Caco-2 (cell line): ENCODE measurements at regions of chr12 and their contacts with region 1.

Region 1: DNA sequence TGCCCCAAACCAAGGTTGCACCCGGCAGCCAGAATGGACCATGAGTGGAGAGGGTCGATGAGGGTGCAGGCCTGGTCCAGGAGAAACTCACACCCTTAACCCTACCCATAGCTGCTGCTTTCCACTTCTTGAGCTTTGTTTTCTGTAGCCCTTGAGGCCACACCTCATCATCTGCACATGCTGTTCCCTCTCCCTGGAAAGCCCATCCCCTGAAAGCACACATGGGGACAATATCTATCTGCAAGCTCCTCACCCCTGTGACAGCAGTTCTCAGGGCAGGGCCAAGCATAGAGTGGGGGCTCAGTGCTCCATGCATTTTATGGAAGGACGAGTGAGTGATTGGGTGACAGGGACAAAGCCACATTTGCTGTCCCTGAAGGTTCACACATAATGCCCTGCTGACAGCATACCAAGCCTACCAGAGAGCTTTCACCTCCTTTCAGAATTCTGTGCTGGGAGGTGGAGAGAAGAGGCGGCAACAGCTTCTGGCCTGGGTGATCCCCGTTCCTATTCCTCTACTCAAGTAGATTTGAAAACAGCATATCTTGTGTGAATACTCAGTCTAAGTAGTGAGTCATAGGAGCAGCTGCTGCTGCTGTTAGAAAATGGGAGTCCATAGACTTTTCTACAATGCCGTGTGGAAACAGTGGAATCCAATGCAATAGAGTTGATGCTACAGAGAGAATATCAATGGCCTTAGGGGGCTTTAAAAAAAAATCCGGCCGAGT is 44.6 kb downstream of the SRGAP1 start:
- DNase-seq: no peak
- H3K4me3 ChIP-seq: no peak overlapping the region
- H3K4me3 Mint-ChIP-seq: no peak overlapping the region
- H3K27ac Mint-ChIP-seq: peak overlapping the region; percentile 74
- H3K4me1 ChIP-seq: peaks cover 39% of the 10 kb centered on the region
- H3K4me1 Mint-ChIP-seq: peaks cover 43% of the 10 kb centered on the region
- H3K27me3 ChIP-seq: no peaks in the 10 kb centered on the region
- H3K27me3 Mint-ChIP-seq: no peaks in the 10 kb centered on the region
- CTCF ChIP-seq: no peak

Region 2: GRCh38 chr12:63862214-63863107 is 26.6 kb before region 1 on chr12:
- CTCF ChIA-PET with region 1: no interaction called
- POLR2A ChIA-PET with region 1: interaction called, 6 read pairs
- intact Hi-C with region 1: loop called (anchors 1 kb)
- DNase-seq: peak; percentile 76 to 83
- H3K4me3 ChIP-seq: no peak overlapping the region
- H3K4me3 Mint-ChIP-seq: peak overlapping the region; percentile 50
- H3K27ac Mint-ChIP-seq: peak overlapping the region; percentile 60
- H3K4me1 ChIP-seq: peaks cover 41% of the 10 kb centered on the region
- H3K4me1 Mint-ChIP-seq: peaks cover 14% of the 10 kb centered on the region
- H3K27me3 ChIP-seq: no peaks in the 10 kb centered on the region
- H3K27me3 Mint-ChIP-seq: no peaks in the 10 kb centered on the region
- CTCF ChIP-seq: no peak

Region 3: GRCh38 chr12:63917864-63918799 is 29.1 kb after region 1 on chr12:
- CTCF ChIA-PET with region 1: no interaction called
- POLR2A ChIA-PET with region 1: no interaction called
- intact Hi-C with region 1: loop called (anchors 1 kb)
- DNase-seq: peak; percentile 52 to 69
- H3K4me3 ChIP-seq: no peak overlapping the region
- H3K4me3 Mint-ChIP-seq: peak overlapping the region; percentile 8
- H3K27ac Mint-ChIP-seq: peak overlapping the region; percentile 77
- H3K4me1 ChIP-seq: peaks cover 74% of the 10 kb centered on the region
- H3K4me1 Mint-ChIP-seq: peaks cover 47% of the 10 kb centered on the region
- H3K27me3 ChIP-seq: no peaks in the 10 kb centered on the region
- H3K27me3 Mint-ChIP-seq: no peaks in the 10 kb centered on the region
- CTCF ChIP-seq: no peak

Region 4: GRCh38 chr12:64171715-64172114 is 282.6 kb after region 1 on chr12:
- CTCF ChIA-PET with region 1: no interaction called
- POLR2A ChIA-PET with region 1: no interaction called
- intact Hi-C with region 1: no loop called
- DNase-seq: no peak
- H3K4me3 ChIP-seq: no peak overlapping the region
- H3K4me3 Mint-ChIP-seq: no peak overlapping the region
- H3K27ac Mint-ChIP-seq: peak overlapping the region; percentile 62
- H3K4me1 ChIP-seq: peaks cover 35% of the 10 kb centered on the region
- H3K4me1 Mint-ChIP-seq: peaks cover 11% of the 10 kb centered on the region
- H3K27me3 ChIP-seq: no peaks in the 10 kb centered on the region
- H3K27me3 Mint-ChIP-seq: no peaks in the 10 kb centered on the region
- CTCF ChIP-seq: no peak

Region 5: GRCh38 chr12:65810036-65810435 is 1921.0 kb after region 1 on chr12:
- CTCF ChIA-PET with region 1: interaction called, 15 read pairs
- POLR2A ChIA-PET with region 1: no interaction called
- intact Hi-C with region 1: no loop called
- DNase-seq: no peak
- H3K4me3 ChIP-seq: no peak overlapping the region
- H3K4me3 Mint-ChIP-seq: no peak overlapping the region
- H3K27ac Mint-ChIP-seq: no peak overlapping the region
- H3K4me1 ChIP-seq: no peaks in the 10 kb centered on the region
- H3K4me1 Mint-ChIP-seq: no peaks in the 10 kb centered on the region
- H3K27me3 ChIP-seq: no peaks in the 10 kb centered on the region
- H3K27me3 Mint-ChIP-seq: no peaks in the 10 kb centered on the region
- CTCF ChIP-seq: no peak